Left lung (tissue), 14 donors: ENCODE measurements at regions of chr1 and their contacts with region 1.

Region 1: GRCh38 chr1:243343970-243344937 is 88.4 kb downstream of the SDCCAG8 start:
- DNase-seq: peak in 2 of 4 donors; percentile 26 to 46
- ATAC-seq: peak; percentile 83
- H3K4me3 ChIP-seq: no peak overlapping the region
- H3K27ac ChIP-seq: no peak overlapping the region
- H3K4me1 ChIP-seq: no peaks in the 10 kb centered on the region
- H3K27me3 ChIP-seq: no peaks in the 10 kb centered on the region
- CTCF ChIP-seq: peak; percentile 54 to 56

Region 2: GRCh38 chr1:243495442-243496172 is 151.4 kb after region 1 on chr1:
- intact Hi-C with region 1: no loop called
- DNase-seq: no peak
- ATAC-seq: peak; percentile 65
- H3K4me3 ChIP-seq: peak overlapping the region in 1 of 2 donors; percentile 12
- H3K27ac ChIP-seq: peak overlapping the region; percentile 56 to 80
- H3K4me1 ChIP-seq: peaks cover 0 to 21% of the 10 kb centered on the region in 2 donors
- H3K27me3 ChIP-seq: no peaks in the 10 kb centered on the region
- CTCF ChIP-seq: no peak

Region 3: GRCh38 chr1:243748706-243749283 is 404.5 kb after region 1 on chr1:
- intact Hi-C with region 1: loop called in 1 of 2 experiments (anchors 10 kb)
- DNase-seq: peak in 2 of 4 donors; percentile 46 to 67
- ATAC-seq: peak; percentile 99
- H3K4me3 ChIP-seq: no peak overlapping the region
- H3K27ac ChIP-seq: no peak overlapping the region
- H3K4me1 ChIP-seq: peaks cover 0 to 8% of the 10 kb centered on the region in 2 donors
- H3K27me3 ChIP-seq: no peaks in the 10 kb centered on the region
- CTCF ChIP-seq: peak; percentile 67 to 72

Region 4: GRCh38 chr1:244272471-244273261 is 928.4 kb after region 1 on chr1:
- intact Hi-C with region 1: loop called in 1 of 2 experiments (anchors 5 kb)
- DNase-seq: peak in 2 of 4 donors; percentile 76 to 88
- ATAC-seq: peak; percentile 98
- H3K4me3 ChIP-seq: no peak overlapping the region
- H3K27ac ChIP-seq: peak overlapping the region in 1 of 2 donors; percentile 20
- H3K4me1 ChIP-seq: peaks cover 0 to 17% of the 10 kb centered on the region in 2 donors
- H3K27me3 ChIP-seq: no peaks in the 10 kb centered on the region
- CTCF ChIP-seq: peak; percentile 84 to 89